ENCODE measurements at regions of chrX and their contacts with region 1.

Region 1: DNA sequence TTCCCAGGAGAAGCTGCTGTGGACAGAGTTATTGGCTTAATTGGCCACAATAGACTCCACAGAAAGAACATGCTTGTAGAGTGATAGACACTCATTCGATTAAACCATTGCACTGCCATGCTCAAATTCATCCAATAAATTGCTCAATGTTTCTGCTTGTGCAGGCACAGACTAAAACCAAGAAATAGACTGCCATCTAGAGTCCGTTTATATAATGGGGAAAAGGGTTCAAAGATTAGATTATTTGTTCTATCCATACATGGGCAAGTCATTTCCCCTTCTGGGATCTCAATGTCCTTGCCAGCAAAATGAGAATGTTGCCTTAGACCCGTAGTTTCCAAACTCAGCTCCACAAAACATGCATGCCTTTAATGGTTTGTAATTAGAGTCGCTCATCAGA is 8.7 kb downstream of the SMIM10 start:
- DNase-seq: no peak
- ATAC-seq: peak in 2 of 4 donors; percentile 21 to 40
- H3K4me3 ChIP-seq: no peak overlapping the region
- H3K27ac ChIP-seq: no peak overlapping the region
- H3K4me1 ChIP-seq: no peaks in the 10 kb centered on the region
- H3K27me3 ChIP-seq: peaks cover 0 to 3% (median 0%) of the 10 kb centered on the region in 3 donors
- CTCF ChIP-seq: peak; percentile 37

Region 2: DNA sequence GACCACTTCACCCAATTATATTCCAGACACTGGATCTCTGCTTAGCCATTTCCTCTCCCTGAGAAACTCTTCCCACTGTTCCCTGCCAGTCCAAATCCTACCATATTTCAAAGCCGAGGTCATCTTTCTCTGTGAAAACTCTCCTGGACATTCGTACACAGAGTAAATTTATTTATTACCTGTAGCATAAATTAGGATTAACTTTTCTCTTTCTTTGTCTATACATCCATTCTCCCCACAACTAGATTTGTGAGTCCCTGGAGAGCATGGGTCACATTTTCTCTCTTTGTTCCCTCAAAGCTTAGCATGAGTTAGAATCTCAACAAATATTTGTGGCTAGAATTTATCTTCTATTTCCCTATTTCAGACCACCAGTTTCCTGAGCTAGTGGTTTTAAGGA is 36.4 kb before region 1 on chrX:
- intact Hi-C with region 1: loop called (anchors 2 to 5 kb)
- DNase-seq: no peak
- ATAC-seq: no peak
- H3K4me3 ChIP-seq: no peak overlapping the region
- H3K27ac ChIP-seq: no peak overlapping the region
- H3K4me1 ChIP-seq: no peaks in the 10 kb centered on the region
- H3K27me3 ChIP-seq: peaks cover 0 to 4% (median 0%) of the 10 kb centered on the region in 3 donors
- CTCF ChIP-seq: no peak

Region 3: DNA sequence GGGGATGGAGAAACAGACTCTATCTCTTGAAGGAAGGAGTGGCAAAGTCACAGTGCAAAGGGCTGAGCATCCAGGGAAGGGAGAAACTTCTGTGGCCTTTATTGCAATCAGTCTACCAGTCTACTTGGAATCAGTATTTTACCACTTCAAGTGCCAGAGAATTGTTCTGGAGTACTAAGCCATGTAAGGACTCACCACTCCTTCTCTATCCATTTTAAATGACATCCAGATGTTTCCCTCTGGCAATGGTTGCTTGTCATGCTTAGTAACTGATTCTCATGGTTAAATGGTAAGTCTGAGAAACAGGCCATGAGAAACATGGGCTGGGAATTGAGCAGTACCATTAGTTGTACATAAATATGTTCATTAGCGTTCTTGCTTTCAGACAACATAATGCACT is 29.7 kb before region 1 on chrX:
- intact Hi-C with region 1: loop called (anchors 2 to 5 kb)
- DNase-seq: no peak
- ATAC-seq: no peak
- H3K4me3 ChIP-seq: no peak overlapping the region
- H3K27ac ChIP-seq: no peak overlapping the region
- H3K4me1 ChIP-seq: no peaks in the 10 kb centered on the region
- H3K27me3 ChIP-seq: no peaks in the 10 kb centered on the region
- CTCF ChIP-seq: no peak

Measured in psoas muscle (tissue), 8 donors.